ENCODE measurements at regions of chr7 and their contacts with region 1.

Region 1: DNA sequence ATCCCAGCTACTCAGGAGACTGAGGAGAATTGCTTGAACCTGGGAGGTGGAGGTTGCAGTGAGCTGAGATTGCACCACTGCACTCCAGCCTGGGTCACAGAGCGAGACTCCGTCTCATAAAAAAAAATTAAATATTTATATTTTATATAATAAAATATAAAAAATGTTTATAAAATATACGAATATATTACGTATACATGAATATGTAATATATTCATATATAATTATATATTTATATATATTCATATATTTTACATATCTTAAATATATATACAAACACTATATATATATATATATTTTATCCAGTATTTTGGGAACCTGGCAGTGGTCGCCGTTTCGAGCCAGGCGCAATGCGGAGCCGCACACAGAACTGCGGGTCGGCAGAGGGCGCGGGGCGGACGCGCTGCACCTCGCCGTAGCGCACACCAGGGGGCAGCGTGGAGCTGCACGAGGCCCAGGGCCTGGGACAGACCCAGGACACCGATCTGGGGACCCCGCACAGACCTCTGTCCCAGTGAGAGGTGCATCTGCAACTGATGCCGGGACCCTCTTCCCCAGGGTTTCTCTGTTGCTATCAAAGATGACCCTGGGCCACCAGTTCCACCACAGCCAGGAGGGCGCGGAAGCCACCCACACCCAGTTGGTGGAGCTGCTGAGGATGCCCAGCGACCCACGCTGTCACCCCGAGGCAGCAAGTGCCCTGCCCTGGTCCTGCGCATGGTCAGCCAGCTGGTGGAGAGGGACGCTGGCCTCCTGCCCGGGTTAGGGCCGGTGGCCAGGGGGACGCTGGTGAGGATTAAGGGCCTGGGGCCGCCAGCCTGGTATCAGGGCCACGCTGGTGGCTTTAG is 22.7 kb downstream of the AP5Z1 start:
- H3K4me3 ChIP-seq: no peak overlapping the region
- H3K27ac ChIP-seq: no peak overlapping the region
- H3K4me1 ChIP-seq: no peaks in the 10 kb centered on the region; the same call in 1 of the 2 replicates
- CTCF ChIP-seq: peak; percentile 87

Region 2: GRCh38 chr7:5012985-5013384 is 214.9 kb after region 1 on chr7:
- CTCF ChIA-PET with region 1: no interaction called
- POLR2A ChIA-PET with region 1: no interaction called
- H3K4me3 ChIP-seq: no peak overlapping the region
- H3K27ac ChIP-seq: no peak overlapping the region
- H3K4me1 ChIP-seq: no peaks in the 10 kb centered on the region
- CTCF ChIP-seq: no peak

Region 3: DNA sequence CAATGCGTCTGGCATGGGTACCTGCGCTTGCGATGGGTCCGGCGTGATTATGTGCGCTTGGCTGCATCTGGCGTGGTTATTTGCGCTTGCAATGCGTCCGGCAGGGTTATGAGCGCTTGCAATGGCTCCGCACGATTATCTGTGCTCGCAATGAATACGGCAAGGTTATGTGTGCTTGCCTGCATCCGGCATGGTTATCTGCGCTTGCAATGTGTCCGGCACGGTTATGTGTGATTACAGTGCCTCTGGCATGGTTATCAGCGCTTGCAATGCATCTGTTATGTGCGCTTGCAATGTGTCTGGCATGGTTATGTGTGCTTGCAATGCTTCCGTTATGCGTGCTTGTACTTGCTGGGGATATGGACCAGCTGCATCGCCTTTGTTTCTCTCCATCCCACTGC is 285.2 kb after region 1 on chr7:
- CTCF ChIA-PET with region 1: interaction called, 25 read pairs
- POLR2A ChIA-PET with region 1: no interaction called
- H3K4me3 ChIP-seq: no peak overlapping the region
- H3K27ac ChIP-seq: no peak overlapping the region
- H3K4me1 ChIP-seq: no peaks in the 10 kb centered on the region
- CTCF ChIP-seq: no peak